ENCODE measurements at regions of chr2 and their contacts with region 1.

Region 1: DNA sequence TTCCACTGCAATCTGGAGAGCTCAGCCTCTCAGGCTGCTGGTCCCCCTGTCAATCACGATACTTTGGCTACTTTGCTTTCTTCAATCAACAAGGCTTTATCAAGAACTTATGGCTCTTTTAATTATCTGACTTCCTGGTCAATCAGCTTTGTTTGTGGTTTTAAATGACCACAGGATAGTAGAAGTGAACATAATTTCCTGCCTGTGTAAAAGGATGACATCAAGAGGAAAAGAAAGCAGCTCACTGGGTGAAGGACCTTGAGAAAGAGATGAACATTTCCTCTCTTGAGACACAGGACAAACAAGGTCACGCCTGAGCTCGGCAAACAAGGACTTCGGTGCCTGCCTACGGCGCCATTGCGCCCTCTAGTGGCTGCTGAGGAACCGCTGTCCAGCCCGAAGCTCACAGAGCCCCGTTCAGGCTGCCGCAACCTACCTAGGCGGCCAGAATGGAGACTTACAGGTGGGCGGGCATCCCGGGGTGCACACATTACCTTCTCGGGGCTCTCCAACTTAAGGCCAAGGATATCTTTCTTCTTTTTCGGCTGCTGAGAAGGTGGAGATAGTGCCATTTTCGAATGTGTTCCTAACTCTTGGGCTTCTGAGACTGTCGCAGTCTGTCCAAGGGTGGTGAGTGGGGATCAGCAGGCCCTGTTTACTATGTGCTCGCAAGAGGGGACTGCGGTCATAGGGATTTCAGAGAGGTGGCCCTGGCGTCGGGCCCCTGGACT is 54.0 kb downstream of the IL1RL2 start:
- DNase-seq: peak; percentile 91
- ATAC-seq: peak; percentile 92
- H3K4me3 Mint-ChIP-seq: no peak overlapping the region
- H3K27ac Mint-ChIP-seq: no peak overlapping the region
- H3K4me1 Mint-ChIP-seq: peaks cover 20% of the 10 kb centered on the region
- H3K27me3 Mint-ChIP-seq: no peaks in the 10 kb centered on the region
- CTCF ChIP-seq: peak; percentile 94

Region 2: GRCh38 chr2:102005989-102006885 is 234.6 kb before region 1 on chr2:
- CTCF ChIA-PET with region 1: interaction called, 28 read pairs
- POLR2A ChIA-PET with region 1: no interaction called
- DNase-seq: peak; percentile 50
- ATAC-seq: peak; percentile 95
- H3K4me3 Mint-ChIP-seq: no peak overlapping the region
- H3K27ac Mint-ChIP-seq: no peak overlapping the region
- H3K4me1 Mint-ChIP-seq: peaks cover 4% of the 10 kb centered on the region
- H3K27me3 Mint-ChIP-seq: no peaks in the 10 kb centered on the region
- CTCF ChIP-seq: peak; percentile 48; the same call in 1 of the 2 replicates

Region 3: DNA sequence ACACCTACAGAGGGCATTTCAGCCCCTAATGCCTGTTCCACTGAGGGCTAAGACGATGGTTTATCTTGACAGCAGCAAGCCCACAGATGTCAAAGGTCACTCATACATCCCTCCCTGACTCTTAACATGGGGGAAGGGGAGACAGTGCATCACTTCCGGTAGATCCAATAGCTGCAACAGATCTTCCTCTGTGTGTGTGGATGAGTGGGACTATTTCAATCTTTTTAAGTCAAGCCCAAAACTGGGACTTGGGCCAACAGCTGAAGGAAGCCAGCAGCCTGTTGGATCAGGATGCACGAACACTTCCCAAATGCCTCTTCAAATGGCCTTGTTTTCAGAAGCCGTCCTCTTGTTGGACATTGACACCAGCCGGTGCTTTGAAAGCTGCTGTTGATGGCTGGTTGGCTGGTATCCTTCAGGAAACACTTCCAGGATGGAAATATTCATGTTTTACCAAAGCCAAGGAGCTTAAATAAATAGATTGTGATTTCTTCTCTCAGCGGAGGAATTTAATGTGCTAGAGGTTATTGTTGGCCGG is 189.9 kb before region 1 on chr2:
- CTCF ChIA-PET with region 1: no interaction called
- POLR2A ChIA-PET with region 1: no interaction called
- DNase-seq: no peak
- ATAC-seq: no peak
- H3K4me3 Mint-ChIP-seq: no peak overlapping the region
- H3K27ac Mint-ChIP-seq: no peak overlapping the region
- H3K4me1 Mint-ChIP-seq: 0 out of 2 replicates have a peak, but pooled peaks cover 3% of the 10 kb centered on the region
- H3K27me3 Mint-ChIP-seq: no peaks in the 10 kb centered on the region
- CTCF ChIP-seq: no peak

Region 4: GRCh38 chr2:102187496-102188150 is 53.2 kb before region 1 on chr2:
- CTCF ChIA-PET with region 1: interaction called, 13 read pairs
- POLR2A ChIA-PET with region 1: no interaction called
- DNase-seq: peak; percentile 58
- ATAC-seq: peak; percentile 85
- H3K4me3 Mint-ChIP-seq: peak overlapping the region; percentile 71
- H3K27ac Mint-ChIP-seq: no peak overlapping the region
- H3K4me1 Mint-ChIP-seq: peaks cover 3% of the 10 kb centered on the region; the same call in 1 of the 2 replicates
- H3K27me3 Mint-ChIP-seq: peaks cover 48% of the 10 kb centered on the region
- CTCF ChIP-seq: no peak

Region 5: DNA sequence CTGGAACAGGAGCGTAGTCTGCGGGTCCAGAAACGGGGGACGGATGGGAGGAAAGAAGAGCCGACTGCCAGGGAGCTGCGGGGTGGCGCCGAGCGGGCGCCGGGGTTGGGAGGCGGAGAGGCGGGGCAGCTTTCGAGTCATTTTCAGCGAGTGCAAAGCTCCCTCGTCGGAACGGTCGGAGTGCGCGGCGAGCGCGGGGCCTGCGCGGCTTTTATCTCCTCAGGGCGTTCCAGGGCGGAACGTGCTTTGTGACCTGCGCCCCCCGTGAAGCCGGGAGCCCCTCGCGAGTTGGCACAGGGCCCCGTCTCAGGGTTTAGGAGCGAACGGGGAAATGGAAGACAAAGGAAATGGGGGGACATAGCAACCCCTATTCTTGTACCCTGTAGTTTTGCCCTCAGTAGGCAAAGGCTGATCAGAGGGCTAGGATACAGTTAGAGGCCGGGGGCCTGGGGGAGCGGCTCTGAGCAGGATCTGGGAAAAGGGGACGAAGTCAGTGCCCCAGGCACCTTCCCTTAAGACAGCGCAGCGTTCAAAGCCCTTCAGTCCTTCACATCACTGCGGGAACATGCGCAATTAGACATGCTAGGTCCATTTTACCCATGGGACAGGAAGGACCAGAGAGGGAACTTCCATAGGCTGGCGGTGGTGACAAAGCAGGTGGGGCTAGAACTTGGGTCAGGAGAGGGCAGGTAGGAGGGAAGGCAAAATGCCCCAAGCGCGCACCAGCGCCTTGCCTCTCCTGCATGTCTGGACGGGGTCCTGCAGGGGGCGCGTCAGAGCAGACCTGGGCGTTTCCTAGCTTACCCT is 10.4 kb after region 1 on chr2:
- CTCF ChIA-PET with region 1: interaction called, 59 read pairs
- POLR2A ChIA-PET with region 1: no interaction called
- DNase-seq: peak; percentile 80
- ATAC-seq: peak; percentile 93
- H3K4me3 Mint-ChIP-seq: peak overlapping the region; percentile 82
- H3K27ac Mint-ChIP-seq: no peak overlapping the region
- H3K4me1 Mint-ChIP-seq: peaks cover 3% of the 10 kb centered on the region; the same call in 1 of the 2 replicates
- H3K27me3 Mint-ChIP-seq: peaks cover 34% of the 10 kb centered on the region
- CTCF ChIP-seq: peak; percentile 77

Region 6: DNA sequence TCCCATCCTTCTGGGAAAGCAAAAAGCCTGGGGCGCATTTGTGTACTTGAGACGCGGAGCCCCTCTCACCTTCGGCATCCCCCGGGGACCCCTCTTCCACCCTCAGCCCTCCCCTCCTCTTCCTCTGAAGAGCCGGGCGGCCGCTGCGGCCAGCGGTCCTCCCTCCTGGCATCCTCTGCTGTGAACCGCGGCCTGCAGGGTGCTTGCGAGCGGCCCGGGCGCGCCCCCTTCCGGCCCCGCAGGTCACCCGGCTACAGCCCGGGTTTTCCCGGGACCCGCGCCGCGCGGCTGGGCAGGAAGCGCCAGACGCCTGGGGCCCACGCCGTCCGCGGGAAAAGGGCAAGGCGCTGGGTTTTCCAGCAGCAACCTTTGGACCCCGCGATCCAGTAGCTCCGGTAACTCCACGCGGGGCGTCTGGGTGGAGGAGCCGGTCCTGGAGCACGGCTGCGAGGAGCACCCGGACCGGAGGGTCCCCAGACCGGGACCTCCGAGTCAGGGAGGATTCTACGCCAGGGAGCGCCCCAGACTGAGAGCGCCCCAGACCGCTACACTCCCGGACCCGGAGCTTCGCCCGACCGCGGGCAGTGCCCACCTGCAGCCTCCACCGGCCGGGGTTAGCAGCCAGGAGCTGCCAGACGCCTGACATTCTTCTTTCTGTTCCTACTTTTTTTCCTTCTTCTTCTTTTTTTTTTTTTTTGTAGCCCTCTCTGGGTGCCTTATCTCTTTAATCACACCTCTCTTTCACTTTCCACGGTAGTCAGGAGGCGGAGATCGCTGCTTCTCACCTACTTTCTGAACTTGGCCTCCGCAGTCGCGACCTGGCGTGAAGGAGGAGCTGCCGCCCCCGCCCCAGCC is 114.9 kb after region 1 on chr2 and contains the start of gene IL18R1:
- CTCF ChIA-PET with region 1: interaction called, 11 read pairs
- POLR2A ChIA-PET with region 1: no interaction called
- DNase-seq: peak; percentile 79
- ATAC-seq: peak; percentile 97
- H3K4me3 Mint-ChIP-seq: peak within 1 kb of the TSS; percentile 83
- H3K27ac Mint-ChIP-seq: no peak within 1 kb of the TSS
- H3K4me1 Mint-ChIP-seq: peaks cover 3% of the 10 kb centered on the region; the same call in 1 of the 2 replicates
- H3K27me3 Mint-ChIP-seq: peaks cover 32% of the 10 kb centered on the region
- CTCF ChIP-seq: peak; percentile 59; the same call in 1 of the 2 replicates
- total RNA-seq, gene IL18R1: 0.25 to 0.46 TPM in 2 of 3 replicates, not detected in the other

Measured in WTC11 (cell line).